Panc1 (cell line): ENCODE measurements at regions of chr17 and their contacts with region 1.

Region 1: DNA sequence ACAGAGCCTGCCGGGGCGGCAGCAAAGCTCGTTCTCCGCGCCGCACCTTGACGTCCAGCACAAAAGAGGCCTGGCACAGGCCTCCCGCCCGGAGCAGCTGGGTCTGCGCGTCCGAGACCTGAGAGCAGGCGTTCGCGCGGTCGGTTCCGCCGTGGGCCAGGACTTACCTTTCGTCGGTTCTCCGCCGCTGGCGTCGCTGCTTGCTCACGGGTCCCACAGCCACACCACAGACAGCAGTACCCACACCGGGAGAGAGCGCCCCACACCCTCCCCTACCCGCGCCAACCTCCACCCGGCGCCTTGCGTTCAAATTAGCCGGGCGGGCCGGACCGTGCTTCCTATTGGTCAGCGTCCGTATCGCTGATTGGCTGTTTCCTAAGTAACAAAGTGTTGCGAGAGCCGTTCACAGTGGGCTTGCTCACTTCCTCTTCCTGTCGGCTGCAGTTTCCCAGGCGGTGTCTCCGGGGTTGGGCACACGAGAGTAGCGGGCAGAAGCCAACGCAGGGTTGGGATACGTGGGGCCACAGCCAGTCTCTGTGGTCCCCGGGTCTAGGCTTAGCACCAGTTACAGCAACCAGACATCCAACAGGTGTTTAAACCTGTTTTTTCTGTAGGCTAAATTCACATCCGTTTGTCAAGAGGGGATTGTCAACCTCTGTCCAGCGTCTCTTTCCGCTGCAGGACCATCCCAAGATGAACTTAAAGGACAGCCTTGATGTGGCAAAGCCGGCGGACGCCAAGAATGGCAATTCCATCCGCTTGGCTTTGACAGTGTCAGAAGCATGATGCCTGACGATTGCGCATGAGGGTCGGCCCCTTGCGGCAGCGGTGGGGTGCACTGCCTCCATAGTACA is at the start of gene KIF18B:
- DNase-seq: peak; percentile 56
- ATAC-seq: peak; percentile 97
- H3K4me3 ChIP-seq: peak within 1 kb of the TSS; percentile 72 to 79
- H3K27ac ChIP-seq: peak within 1 kb of the TSS; percentile 95
- H3K4me1 ChIP-seq: 0 out of 2 replicates have a peak, but pooled peaks cover 2% of the 10 kb centered on the region
- H3K27me3 ChIP-seq: no peaks in the 10 kb centered on the region
- CTCF ChIP-seq: no peak
- total RNA-seq, gene KIF18B: 31.3 TPM

Region 2: GRCh38 chr17:45042346-45043120 is 94.8 kb after region 1 on chr17:
- CTCF ChIA-PET with region 1: no interaction called
- POLR2A ChIA-PET with region 1: interaction called, 11 read pairs
- in situ Hi-C with region 1: no loop called
- intact Hi-C with region 1: no loop called
- DNase-seq: no peak
- ATAC-seq: no peak
- H3K4me3 ChIP-seq: no peak overlapping the region
- H3K27ac ChIP-seq: no peak overlapping the region
- H3K4me1 ChIP-seq: peaks cover 6% of the 10 kb centered on the region; the same call in 1 of the 2 replicates
- H3K27me3 ChIP-seq: no peaks in the 10 kb centered on the region
- CTCF ChIP-seq: no peak

Region 3: GRCh38 chr17:45200701-45201100 is 253.0 kb after region 1 on chr17:
- CTCF ChIA-PET with region 1: no interaction called
- POLR2A ChIA-PET with region 1: no interaction called
- in situ Hi-C with region 1: no loop called
- intact Hi-C with region 1: no loop called
- DNase-seq: no peak
- ATAC-seq: no peak
- H3K4me3 ChIP-seq: no peak overlapping the region
- H3K27ac ChIP-seq: no peak overlapping the region
- H3K4me1 ChIP-seq: peaks cover 18% of the 10 kb centered on the region
- H3K27me3 ChIP-seq: no peaks in the 10 kb centered on the region
- CTCF ChIP-seq: no peak